Left ventricle myocardium inferior (tissue), 1 donor: ENCODE measurements at regions of chr17 and their contacts with region 1.

Region 1: GRCh38 chr17:50783193-50783660 is 15.9 kb upstream of the ANKRD40CL start:
- DNase-seq: peak; percentile 84
- H3K4me3 ChIP-seq: no peak overlapping the region
- H3K27ac ChIP-seq: no peak overlapping the region
- H3K4me1 ChIP-seq: peaks cover 12% of the 10 kb centered on the region
- H3K27me3 ChIP-seq: peaks cover 5% of the 10 kb centered on the region
- CTCF ChIP-seq: peak; percentile 98

Region 2: DNA sequence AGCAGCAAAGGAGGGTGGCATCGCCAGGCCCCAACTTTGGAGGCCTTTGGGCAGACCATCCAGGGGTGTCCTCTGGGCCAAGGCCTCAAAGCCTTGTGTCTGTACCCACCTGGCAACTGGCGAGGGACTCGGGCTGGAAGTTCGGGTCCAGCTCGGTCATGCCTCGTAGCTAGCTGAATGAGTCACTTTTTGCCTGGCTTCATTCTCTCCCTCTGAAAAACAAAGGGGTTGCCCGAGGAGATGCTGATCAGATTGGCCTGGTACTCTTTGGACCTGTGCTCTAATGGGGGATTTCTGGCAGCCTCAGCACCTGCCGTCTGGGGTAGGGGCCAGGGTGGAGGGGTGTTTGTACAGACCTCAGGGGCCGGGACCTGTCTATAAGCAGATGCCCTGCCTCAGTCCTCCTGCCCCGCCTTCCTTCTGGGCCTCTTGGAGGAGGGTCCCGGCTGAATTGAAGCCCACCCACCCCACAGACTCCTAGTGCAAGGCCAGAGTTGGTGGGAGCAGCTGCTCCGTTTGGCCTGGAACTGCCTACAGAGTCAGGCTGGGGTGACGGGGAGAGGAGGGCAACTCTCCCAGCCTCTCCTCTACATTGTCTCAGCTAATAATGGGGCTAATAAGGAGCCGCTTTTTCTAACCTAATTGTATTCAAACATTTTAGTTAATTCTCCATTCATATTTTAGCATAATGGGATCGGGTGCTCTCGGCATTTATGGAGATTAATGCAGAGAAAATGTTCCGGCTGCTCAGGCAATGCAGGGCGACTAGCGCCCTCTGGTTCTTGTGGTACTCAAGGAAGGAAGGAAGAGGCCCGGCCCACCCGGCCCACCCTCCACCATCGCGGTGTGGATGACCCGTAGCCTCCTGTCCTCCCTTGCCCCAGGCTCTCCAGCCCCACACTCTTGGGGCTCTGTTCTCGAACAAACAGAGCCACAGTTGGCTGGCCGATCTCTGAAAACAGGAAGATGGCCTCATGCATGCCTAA is 169.9 kb before region 1 on chr17:
- intact Hi-C with region 1: no loop called
- DNase-seq: no peak
- H3K4me3 ChIP-seq: no peak overlapping the region
- H3K27ac ChIP-seq: no peak overlapping the region
- H3K4me1 ChIP-seq: peaks cover 8% of the 10 kb centered on the region
- H3K27me3 ChIP-seq: peaks cover 32% of the 10 kb centered on the region
- CTCF ChIP-seq: peak; percentile 65

Region 3: DNA sequence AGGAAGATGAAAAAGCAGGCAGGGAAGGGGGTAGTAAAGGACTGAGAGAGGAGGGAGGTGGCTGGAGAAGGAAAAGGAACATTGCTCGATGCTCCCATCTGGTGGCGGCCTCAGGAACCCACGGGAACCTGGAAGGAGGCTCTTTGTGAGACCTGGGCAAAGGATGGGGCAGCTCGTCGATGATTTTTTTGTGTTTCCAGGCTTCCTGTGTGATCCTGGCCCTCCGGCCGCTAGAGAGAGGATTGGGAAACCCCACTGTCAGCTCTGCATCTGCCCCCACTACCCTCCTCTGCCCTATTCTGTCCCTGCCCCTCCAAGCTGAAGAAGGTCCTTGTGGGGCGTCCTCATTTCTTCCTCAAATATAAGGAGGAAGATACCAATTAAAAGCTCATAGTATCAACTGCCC is 58.7 kb after region 1 on chr17:
- intact Hi-C with region 1: loop called (anchors 2 kb)
- DNase-seq: peak; percentile 61
- H3K4me3 ChIP-seq: no peak overlapping the region
- H3K27ac ChIP-seq: no peak overlapping the region
- H3K4me1 ChIP-seq: peaks cover 22% of the 10 kb centered on the region
- H3K27me3 ChIP-seq: no peaks in the 10 kb centered on the region
- CTCF ChIP-seq: peak; percentile 85

Region 4: DNA sequence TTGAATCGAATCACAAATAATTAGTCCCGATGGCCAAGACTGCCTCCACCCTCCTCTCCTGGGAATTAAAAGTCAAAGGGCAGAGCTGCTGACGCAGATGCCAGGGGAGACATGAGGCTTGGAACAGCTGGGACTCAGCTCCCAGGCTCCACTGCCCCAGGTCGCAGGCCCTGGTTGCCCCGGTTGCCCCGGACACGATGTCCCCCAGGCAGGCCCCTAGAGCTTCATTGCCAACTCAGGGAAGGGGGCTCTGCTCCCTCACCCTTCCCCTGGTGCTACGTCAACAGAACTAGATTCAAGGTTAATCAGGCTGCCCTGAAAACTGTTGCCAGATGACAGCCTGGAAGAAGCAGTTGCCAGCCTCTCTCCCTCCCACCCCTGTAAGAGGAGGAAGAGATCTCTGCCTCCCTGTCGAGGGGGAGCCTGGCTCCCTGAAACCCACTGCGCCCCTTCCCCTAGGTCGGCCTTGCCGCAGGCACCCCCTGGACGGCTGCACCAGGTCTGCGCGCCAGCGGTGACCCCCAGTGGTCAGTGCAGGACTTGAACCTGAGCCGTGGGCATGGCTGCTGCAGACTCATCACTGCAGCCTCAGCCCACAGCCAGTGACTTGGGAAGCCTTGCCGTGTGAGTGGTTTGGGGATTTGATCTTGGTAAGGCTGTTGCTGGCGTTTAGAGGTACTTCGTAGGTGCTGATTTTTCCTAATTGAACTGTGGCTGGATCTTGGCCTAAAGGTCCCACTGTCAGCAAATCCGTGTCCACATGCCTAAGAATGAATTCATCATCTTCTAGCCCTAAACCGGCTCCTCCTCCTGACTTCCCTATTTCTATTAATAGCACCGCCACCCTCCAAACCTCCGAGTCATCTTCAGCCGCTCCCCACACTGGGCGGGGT is 167.0 kb after region 1 on chr17:
- intact Hi-C with region 1: loop called (anchors 10 kb)
- DNase-seq: peak; percentile 77
- H3K4me3 ChIP-seq: peak overlapping the region; percentile 38
- H3K27ac ChIP-seq: peak overlapping the region; percentile 92
- H3K4me1 ChIP-seq: peaks cover 67% of the 10 kb centered on the region
- H3K27me3 ChIP-seq: no peaks in the 10 kb centered on the region
- CTCF ChIP-seq: peak; percentile 85